Mammary epithelial cell (primary cell): ENCODE measurements at regions of chr9 and their contacts with region 1.

Region 1: DNA sequence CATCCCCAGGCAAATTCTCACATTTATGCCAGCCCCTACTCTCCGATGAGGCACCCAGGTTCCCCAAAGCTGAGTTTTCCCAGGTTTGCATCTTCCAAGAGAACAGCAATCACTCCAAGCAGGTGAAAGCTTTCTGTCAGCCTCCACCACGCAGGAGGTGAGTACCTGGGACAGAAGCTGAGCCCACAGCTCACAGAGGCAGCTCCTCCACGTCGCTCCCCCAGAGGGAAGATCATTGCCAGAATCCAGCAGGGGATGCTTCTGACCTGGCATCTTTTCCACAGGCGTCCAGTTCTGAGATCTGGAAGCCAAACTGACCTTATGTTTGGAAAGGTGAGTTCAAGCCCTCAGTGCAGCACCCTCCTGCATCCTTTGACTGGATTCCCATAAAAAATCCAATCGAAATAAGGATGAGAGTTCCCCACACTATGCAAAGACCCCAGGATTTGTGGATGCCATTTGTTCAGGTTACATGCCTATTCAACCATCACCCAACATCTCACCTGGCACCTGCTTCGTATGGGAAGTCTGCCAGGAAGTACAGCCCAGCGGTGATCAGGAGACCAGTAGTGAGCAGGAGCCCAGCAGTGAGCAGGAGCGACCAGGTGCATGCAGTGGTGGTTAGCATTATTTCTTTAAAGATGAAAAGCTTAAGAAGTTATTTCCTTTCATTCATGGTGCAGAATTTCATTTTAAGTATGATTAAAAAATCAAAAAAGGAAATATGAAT is 47.4 kb upstream of the OLFM1 start:
- DNase-seq: no peak
- H3K4me3 ChIP-seq: no peak overlapping the region
- H3K27ac ChIP-seq: no peak overlapping the region
- H3K4me1 ChIP-seq: no peaks in the 10 kb centered on the region
- H3K27me3 ChIP-seq: no peaks in the 10 kb centered on the region
- CTCF ChIP-seq: no peak

Region 2: GRCh38 chr9:134896005-134896833 is 143.9 kb before region 1 on chr9:
- CTCF ChIA-PET with region 1: no interaction called
- dilution Hi-C with region 1: no loop called
- in situ Hi-C with region 1: no loop called
- intact Hi-C with region 1: no loop called
- DNase-seq: peak; percentile 55
- H3K4me3 ChIP-seq: no peak overlapping the region
- H3K27ac ChIP-seq: no peak overlapping the region
- H3K4me1 ChIP-seq: no peaks in the 10 kb centered on the region
- H3K27me3 ChIP-seq: no peaks in the 10 kb centered on the region
- CTCF ChIP-seq: no peak

Region 3: DNA sequence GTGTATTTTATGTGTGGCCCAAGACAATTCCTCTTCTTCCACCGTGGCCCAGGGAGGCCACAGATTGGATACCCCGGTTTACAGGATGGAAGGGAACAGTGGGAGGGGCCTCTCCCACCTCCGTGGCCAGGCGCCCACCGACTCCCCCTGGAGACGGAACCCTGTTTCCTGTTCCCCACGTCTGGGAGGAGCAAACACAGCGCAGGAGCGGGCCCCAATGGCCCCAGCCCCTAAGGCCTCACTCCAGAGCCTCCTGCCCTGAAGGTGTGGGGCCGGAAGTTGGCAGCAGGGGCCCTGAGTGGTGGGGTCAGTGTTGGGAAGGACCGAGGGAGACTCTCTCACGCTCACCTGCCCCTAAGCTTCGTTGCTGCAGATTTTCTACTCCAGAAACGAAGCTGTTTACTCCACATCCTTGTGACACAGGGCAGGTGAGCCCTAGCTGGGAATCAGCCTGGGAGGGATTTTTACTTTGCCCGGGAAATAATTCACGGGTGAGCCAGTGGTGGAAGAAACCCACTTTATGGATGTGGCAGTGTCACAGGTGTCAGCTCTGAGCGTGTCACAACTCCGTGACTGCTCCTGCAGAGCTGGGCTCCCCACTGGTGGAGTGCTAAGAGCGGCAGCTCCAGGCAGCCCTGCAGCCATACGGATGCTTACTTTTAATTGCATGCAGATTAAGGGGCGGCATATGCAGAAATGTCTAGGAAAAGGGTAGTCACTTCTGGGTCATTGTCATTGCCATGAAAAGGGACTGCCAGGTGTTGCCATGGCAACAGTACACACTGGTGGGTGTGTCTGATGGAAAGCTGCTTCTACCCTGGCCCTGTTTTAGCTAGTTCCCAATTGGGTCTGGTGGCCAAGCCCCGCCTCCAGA is 30.1 kb before region 1 on chr9:
- CTCF ChIA-PET with region 1: no interaction called
- dilution Hi-C with region 1: loop called (anchors 5 kb)
- in situ Hi-C with region 1: no loop called
- intact Hi-C with region 1: no loop called
- DNase-seq: no peak
- H3K4me3 ChIP-seq: no peak overlapping the region
- H3K27ac ChIP-seq: no peak overlapping the region
- H3K4me1 ChIP-seq: no peaks in the 10 kb centered on the region
- H3K27me3 ChIP-seq: no peaks in the 10 kb centered on the region
- CTCF ChIP-seq: no peak